ENCODE measurements at regions of chr6 and their contacts with region 1.

Region 1: GRCh38 chr6:52650941-52651340 is 20.0 kb upstream of the TMEM14A start:
- DNase-seq: no peak
- H3K4me3 Mint-ChIP-seq: no peak overlapping the region
- H3K27ac Mint-ChIP-seq: no peak overlapping the region
- H3K4me1 Mint-ChIP-seq: peaks cover 4% of the 10 kb centered on the region
- H3K27me3 Mint-ChIP-seq: peaks cover 22% of the 10 kb centered on the region

Region 2: GRCh38 chr6:52640170-52640569 is 10.8 kb before region 1 on chr6:
- CTCF ChIA-PET with region 1: interaction called, 12 read pairs
- POLR2A ChIA-PET with region 1: no interaction called
- DNase-seq: no peak
- H3K4me3 Mint-ChIP-seq: no peak overlapping the region
- H3K27ac Mint-ChIP-seq: no peak overlapping the region
- H3K4me1 Mint-ChIP-seq: peaks cover 11% of the 10 kb centered on the region
- H3K27me3 Mint-ChIP-seq: peaks cover 19% of the 10 kb centered on the region

Region 3: DNA sequence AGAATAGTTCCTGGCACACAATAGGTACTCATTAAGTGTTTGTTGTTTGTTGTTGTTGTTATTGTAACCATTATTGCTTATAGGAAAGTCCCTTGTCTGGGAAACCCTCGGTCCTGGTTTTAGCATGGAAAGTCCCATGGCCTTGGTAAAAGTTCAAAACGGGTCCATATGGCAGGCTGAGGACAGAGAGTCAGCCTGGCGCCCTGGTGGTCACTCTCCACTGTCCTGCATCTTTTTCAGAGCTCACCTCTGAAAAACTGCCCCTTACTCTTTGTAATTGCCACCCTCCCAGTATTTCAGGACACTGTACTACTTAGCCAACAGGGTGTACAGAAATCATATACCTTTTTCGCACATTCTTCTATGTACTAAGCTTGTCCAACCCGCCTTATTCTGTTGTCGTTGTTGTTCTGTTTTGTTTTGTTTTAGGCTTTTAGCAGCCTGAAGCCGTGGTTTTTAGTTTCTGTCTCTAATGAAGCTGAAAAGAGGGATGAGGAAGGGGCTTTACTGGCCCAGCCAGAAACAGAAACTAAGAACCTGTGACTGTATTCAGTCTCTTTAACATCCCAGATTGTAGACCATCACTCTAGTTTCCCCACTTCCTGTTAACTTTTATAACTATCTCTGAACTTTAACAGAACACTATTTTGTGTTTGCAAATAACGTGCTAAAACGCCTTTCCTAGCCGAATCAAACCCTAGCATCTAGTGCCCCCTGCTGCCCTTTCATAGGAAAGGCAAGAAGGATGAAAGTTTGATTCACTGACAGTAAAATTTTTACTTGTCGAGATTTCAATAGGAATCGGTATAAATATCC is 12.4 kb after region 1 on chr6:
- CTCF ChIA-PET with region 1: interaction called, 19 read pairs
- POLR2A ChIA-PET with region 1: no interaction called
- DNase-seq: peak; percentile 73
- H3K4me3 Mint-ChIP-seq: no peak overlapping the region
- H3K27ac Mint-ChIP-seq: no peak overlapping the region
- H3K4me1 Mint-ChIP-seq: peaks cover 9% of the 10 kb centered on the region
- H3K27me3 Mint-ChIP-seq: no peaks in the 10 kb centered on the region

Region 4: DNA sequence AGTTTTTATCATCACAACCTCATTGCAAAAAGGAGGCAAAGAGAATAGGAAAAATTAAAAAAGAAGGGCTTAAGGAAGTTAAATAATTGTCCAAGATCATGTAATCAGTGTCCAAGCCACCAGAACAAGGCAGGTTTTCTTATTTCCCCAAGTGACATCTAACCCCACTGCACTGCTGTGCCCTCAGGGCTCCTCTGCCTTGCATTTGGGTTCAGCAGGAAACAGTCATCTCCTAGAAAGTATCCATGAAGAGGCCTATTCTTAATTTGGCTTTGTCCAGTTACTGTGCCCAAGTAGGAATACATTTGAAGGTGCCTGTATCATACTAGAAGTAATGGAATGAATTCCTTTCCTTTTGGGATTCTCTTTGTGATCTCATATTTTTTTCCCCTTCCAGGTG is 30.5 kb after region 1 on chr6:
- CTCF ChIA-PET with region 1: no interaction called
- POLR2A ChIA-PET with region 1: no interaction called
- DNase-seq: no peak
- H3K4me3 Mint-ChIP-seq: no peak overlapping the region
- H3K27ac Mint-ChIP-seq: no peak overlapping the region
- H3K4me1 Mint-ChIP-seq: peaks cover 3% of the 10 kb centered on the region
- H3K27me3 Mint-ChIP-seq: no peaks in the 10 kb centered on the region

Region 5: DNA sequence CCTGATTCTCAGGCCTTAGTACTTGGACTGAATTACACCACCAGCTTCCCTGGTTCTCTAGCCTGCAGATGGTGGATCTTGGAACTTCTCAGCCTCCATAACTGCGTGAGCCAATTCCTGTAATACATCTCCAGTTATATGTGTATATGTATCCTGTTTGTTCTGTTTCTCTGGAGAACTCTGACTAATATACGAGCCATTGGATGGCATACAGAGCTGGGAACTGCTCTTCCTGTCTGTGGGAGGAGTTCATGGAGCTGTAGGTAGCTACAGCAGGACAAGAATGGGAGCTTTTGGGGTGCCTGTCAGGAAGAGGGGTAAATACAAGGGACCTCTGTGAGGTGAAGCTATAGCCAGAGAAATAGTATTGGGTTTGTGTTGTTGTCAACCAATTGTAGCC is 61.2 kb after region 1 on chr6:
- CTCF ChIA-PET with region 1: no interaction called
- POLR2A ChIA-PET with region 1: no interaction called
- DNase-seq: no peak
- H3K4me3 Mint-ChIP-seq: no peak overlapping the region
- H3K27ac Mint-ChIP-seq: no peak overlapping the region
- H3K4me1 Mint-ChIP-seq: no peaks in the 10 kb centered on the region
- H3K27me3 Mint-ChIP-seq: no peaks in the 10 kb centered on the region

Region 6: GRCh38 chr6:52815167-52816092 is 164.5 kb after region 1 on chr6:
- CTCF ChIA-PET with region 1: no interaction called
- POLR2A ChIA-PET with region 1: no interaction called
- DNase-seq: peak; percentile 50
- H3K4me3 Mint-ChIP-seq: no peak overlapping the region
- H3K27ac Mint-ChIP-seq: no peak overlapping the region
- H3K4me1 Mint-ChIP-seq: no peaks in the 10 kb centered on the region
- H3K27me3 Mint-ChIP-seq: peaks cover 3% of the 10 kb centered on the region

Measured in activated CD4-positive, alpha-beta T cell treated with anti-CD3 and anti-CD28 coated beads, Interleukin-2, amount 10 ng/mL, durations not matched to agents 7 days and 5 days (primary cell).